ENCODE measurements at regions of chrX and their contacts with region 1.

Region 1: DNA sequence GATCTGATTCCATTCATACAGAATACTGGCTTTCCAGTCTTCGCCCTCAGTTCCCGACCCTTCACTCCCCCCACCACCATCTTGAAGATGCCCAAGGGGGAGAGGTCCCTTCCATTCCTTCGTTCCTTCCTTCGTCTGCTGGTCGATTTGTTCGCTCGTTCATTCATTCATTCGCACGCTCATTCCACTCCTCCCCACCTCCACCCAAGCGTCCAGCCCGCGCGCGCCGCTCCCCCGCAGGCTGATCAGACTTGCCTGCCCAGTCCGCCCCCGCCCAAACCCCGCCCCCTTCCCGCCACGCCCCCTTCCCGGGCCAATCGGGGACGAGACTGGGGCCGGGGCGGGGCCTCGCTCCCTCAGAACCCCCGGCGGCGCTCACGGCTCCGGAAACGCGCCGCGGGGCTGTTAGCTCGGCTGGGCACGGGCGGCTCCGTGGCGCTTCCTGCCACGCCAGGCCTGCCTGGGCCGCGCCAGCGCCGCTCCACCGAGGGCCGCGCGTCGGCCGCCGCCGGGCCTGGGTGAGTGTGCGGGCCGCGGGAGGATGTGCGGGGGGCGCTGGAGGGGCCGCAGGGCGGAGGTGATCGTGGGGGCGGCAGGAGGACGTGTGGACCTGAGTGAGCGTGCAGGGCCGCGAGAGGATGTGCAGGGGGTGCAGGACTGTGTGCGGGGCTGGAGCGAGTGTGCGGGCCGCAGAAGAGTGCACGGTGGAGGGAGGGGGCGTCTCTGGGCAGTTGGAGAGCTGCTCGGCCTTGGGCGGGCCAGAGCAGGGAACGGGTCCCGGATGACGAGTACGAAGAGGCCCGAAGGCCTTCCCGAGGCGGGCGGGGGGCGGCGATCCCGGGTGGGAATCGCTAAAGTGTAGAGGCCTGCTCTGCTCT is at the start of gene ZNF275:
- DNase-seq: peak; percentile 60 to 91 (median 77)
- ATAC-seq: peak; percentile 97
- H3K4me3 ChIP-seq: peak within 1 kb of the TSS; percentile 80
- H3K4me3 Mint-ChIP-seq: peak within 1 kb of the TSS; percentile 89
- H3K27ac ChIP-seq: peak within 1 kb of the TSS in 1 of 2 donors; percentile 41
- H3K27ac Mint-ChIP-seq: peak within 1 kb of the TSS; percentile 66
- H3K4me1 ChIP-seq: peaks cover 40% of the 10 kb centered on the region
- H3K4me1 Mint-ChIP-seq: peaks cover 46% of the 10 kb centered on the region
- H3K27me3 ChIP-seq: peaks cover 0 to 2% of the 10 kb centered on the region in 2 experiments
- H3K27me3 Mint-ChIP-seq: peaks cover 3% of the 10 kb centered on the region
- CTCF ChIP-seq: no peak
- total RNA-seq, gene ZNF275: 10.5 to 11.3 TPM

Region 2: GRCh38 chrX:152830312-152831305 is 503.4 kb before region 1 on chrX and contains the starts of genes CETN2 and NSDHL:
- CTCF ChIA-PET with region 1: no interaction called
- POLR2A ChIA-PET with region 1: no interaction called
- intact Hi-C with region 1: loop called in 1 of 2 experiments (anchors 5 kb)
- DNase-seq: peak; percentile 87 to 96 (median 91)
- ATAC-seq: peak; percentile 97
- H3K4me3 ChIP-seq: peak within 1 kb of the TSS; percentile 78
- H3K4me3 Mint-ChIP-seq: peak within 1 kb of the TSS; percentile 94
- H3K27ac ChIP-seq: peak within 1 kb of the TSS; percentile 53 to 62
- H3K27ac Mint-ChIP-seq: peak within 1 kb of the TSS; percentile 89
- H3K4me1 ChIP-seq: peaks cover 22% of the 10 kb centered on the region
- H3K4me1 Mint-ChIP-seq: peaks cover 36% of the 10 kb centered on the region
- H3K27me3 ChIP-seq: no peaks in the 10 kb centered on the region
- H3K27me3 Mint-ChIP-seq: no peaks in the 10 kb centered on the region
- CTCF ChIP-seq: no peak
- total RNA-seq, gene CETN2: 4.0 to 5.1 TPM
- total RNA-seq, gene NSDHL: 2.7 to 2.9 TPM

Region 3: GRCh38 chrX:153470435-153471363 is 136.7 kb after region 1 on chrX and contains the start of gene HAUS7:
- CTCF ChIA-PET with region 1: interaction called, 3 read pairs
- POLR2A ChIA-PET with region 1: no interaction called
- intact Hi-C with region 1: loop called in 1 of 2 experiments (anchors 5 kb)
- DNase-seq: peak; percentile 81 to 95 (median 86)
- ATAC-seq: peak; percentile 83
- H3K4me3 ChIP-seq: peak within 1 kb of the TSS; percentile 75
- H3K4me3 Mint-ChIP-seq: peak within 1 kb of the TSS; percentile 87
- H3K27ac ChIP-seq: peak within 1 kb of the TSS; percentile 29 to 46
- H3K27ac Mint-ChIP-seq: peak within 1 kb of the TSS; percentile 84
- H3K4me1 ChIP-seq: peaks cover 40% of the 10 kb centered on the region
- H3K4me1 Mint-ChIP-seq: peaks cover 6% of the 10 kb centered on the region
- H3K27me3 ChIP-seq: no peaks in the 10 kb centered on the region
- H3K27me3 Mint-ChIP-seq: no peaks in the 10 kb centered on the region
- CTCF ChIP-seq: peak; percentile 56
- total RNA-seq, gene HAUS7: 24.4 to 25.6 TPM

Region 4: DNA sequence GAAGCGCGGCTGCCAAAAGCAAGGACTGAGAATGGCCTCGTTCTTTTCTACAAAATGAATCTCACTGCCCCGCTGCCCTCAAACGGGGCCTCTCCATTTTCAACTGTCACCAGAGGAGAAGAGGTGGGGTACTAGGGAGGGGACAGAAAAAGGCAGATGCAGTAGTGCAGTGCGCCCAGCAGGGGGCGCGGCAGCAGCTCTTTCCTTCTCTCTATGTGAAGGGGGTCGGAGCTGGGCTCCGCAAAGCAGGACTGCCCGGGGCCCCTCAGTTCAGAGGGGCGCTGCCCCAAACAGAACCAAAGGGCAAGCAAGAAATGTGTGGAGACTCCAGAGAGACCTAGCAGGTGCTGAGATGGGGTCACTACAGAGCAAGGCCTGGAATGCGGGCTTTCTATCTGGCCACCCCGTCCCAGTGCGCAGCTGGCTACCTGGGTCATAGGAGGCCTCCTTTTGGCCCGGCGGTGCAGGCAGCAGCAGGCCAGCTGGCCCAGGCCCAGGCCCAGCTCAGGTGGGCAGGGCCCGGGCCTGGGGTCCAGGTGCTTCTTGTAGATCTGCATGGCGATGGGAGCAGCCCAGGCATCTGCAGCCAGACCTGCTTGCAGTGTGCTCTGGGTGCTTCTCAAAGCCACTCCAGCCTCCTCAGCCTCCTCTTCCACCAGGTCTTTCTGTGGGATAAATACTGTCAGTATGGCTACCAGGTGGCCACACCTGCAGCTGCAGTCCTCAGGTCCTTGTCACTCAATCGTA is 679.8 kb after region 1 on chrX:
- CTCF ChIA-PET with region 1: no interaction called
- POLR2A ChIA-PET with region 1: no interaction called
- intact Hi-C with region 1: no loop called
- DNase-seq: peak; percentile 23 to 77 (median 42)
- ATAC-seq: peak; percentile 87
- H3K4me3 ChIP-seq: no peak overlapping the region
- H3K4me3 Mint-ChIP-seq: peak overlapping the region; percentile 54
- H3K27ac ChIP-seq: no peak overlapping the region
- H3K27ac Mint-ChIP-seq: peak overlapping the region; percentile 61
- H3K4me1 ChIP-seq: peaks cover 35% of the 10 kb centered on the region
- H3K4me1 Mint-ChIP-seq: peaks cover 5% of the 10 kb centered on the region
- H3K27me3 ChIP-seq: no peaks in the 10 kb centered on the region
- H3K27me3 Mint-ChIP-seq: no peaks in the 10 kb centered on the region
- CTCF ChIP-seq: peak; percentile 69

Measured in CD4-positive, alpha-beta T cell (primary cell).